ENCODE measurements at regions of chr7 and their contacts with region 1.

Region 1: DNA sequence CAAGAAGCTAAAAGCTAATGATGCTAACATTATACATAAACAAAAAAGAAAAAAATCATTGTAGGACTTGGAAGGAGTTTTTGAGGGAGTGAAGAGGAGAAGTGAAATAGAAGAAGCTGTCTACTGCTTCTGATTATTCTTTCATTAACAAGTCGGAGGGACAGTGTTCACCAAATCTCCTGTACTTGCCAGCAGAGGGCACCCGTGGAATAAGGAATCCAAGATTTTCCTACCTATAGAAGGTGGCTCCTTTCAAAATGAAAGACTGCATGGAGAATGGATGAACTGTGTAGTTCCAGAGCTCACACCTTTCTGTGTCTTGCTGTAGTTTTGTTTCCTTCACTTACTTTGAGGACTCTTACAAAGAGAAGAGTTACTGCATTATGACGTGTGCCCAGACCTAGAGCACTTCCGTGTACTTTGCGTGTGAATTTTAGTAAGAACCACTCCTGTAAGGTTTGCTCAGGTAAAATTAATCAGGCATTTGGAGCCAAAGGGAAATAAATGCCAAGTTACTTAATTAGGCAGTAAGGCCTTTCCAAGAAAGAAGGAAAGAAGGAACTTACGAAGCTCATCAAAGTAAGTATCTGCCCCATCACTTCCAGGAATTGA is 145.1 kb downstream of the SEMA3D start:
- DNase-seq: peak; percentile 63
- H3K4me3 ChIP-seq: no peak overlapping the region
- H3K27ac ChIP-seq: no peak overlapping the region
- H3K4me1 ChIP-seq: no peaks in the 10 kb centered on the region
- H3K27me3 ChIP-seq: no peaks in the 10 kb centered on the region
- CTCF ChIP-seq: peak; percentile 12 to 73 (median 71)
- POLR2A ChIP-seq: no peak

Region 2: DNA sequence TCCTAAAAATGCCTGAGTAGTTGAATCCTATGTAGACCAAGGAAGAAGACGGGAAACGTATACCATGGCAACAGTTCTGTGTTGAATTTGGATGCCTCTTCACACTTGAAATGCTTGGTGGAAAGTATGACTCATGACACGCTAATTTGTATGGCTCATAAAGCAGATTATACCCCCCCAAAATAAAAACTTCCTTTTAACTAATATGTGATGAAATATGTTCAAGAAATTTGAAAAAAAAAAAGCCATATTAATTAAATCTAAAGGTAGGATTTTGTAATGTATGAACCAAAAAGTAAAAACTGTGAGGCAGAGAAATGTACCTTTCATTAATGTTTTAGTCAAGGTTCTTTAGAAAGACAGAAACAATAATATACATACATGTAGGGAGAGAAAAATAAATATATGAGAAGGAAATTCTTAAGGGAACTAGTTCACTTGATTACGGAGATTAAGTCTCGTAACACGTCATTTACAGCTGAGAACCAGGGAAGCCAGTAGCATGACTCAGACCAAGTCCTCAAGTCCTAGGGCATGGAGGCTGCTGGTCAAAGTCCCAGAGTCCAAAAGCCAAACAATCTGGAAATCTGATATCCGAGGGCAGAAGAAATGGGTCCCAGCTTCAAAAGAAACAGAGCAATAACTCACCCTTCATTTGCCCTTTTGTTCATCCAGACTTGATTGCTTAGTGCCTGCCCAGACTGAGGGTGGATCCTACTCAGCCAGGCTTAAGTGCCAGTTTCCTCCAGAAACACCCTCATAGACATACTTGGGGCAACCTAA is 340.0 kb before region 1 on chr7:
- intact Hi-C with region 1: no loop called
- DNase-seq: no peak
- H3K4me3 ChIP-seq: no peak overlapping the region
- H3K27ac ChIP-seq: no peak overlapping the region
- H3K4me1 ChIP-seq: no peaks in the 10 kb centered on the region
- H3K27me3 ChIP-seq: no peaks in the 10 kb centered on the region
- CTCF ChIP-seq: no peak
- POLR2A ChIP-seq: no peak

Region 3: GRCh38 chr7:85464042-85464651 is 422.4 kb after region 1 on chr7:
- intact Hi-C with region 1: loop called (anchors 5 kb)
- DNase-seq: no peak
- H3K4me3 ChIP-seq: no peak overlapping the region
- H3K27ac ChIP-seq: no peak overlapping the region
- H3K4me1 ChIP-seq: no peaks in the 10 kb centered on the region
- H3K27me3 ChIP-seq: no peaks in the 10 kb centered on the region
- CTCF ChIP-seq: peak in 3 of 4 experiments; percentile 16 to 37 (median 28)
- POLR2A ChIP-seq: no peak

Measured in prostate gland (tissue), 2 donors.